ENCODE measurements at regions of chr2 and their contacts with region 1.

Region 1: GRCh38 chr2:96536445-96537065 is at the start of gene ARID5A:
- DNase-seq: peak; percentile 97
- H3K4me3 Mint-ChIP-seq: peak within 1 kb of the TSS; percentile 93
- H3K27ac Mint-ChIP-seq: peak within 1 kb of the TSS; percentile 94
- H3K4me1 Mint-ChIP-seq: peaks cover 54% of the 10 kb centered on the region
- H3K27me3 Mint-ChIP-seq: no peaks in the 10 kb centered on the region
- total RNA-seq, gene ARID5A: 214 and 229 TPM in 2 replicates

Region 2: GRCh38 chr2:96208143-96209010 is 328.2 kb before region 1 on chr2 and contains the start of gene STARD7:
- intact Hi-C with region 1: loop called (anchors 5 kb)
- DNase-seq: peak; percentile 99
- H3K4me3 Mint-ChIP-seq: peak within 1 kb of the TSS; percentile 96
- H3K27ac Mint-ChIP-seq: peak within 1 kb of the TSS; percentile 90
- H3K4me1 Mint-ChIP-seq: peaks cover 50% of the 10 kb centered on the region
- H3K27me3 Mint-ChIP-seq: no peaks in the 10 kb centered on the region
- total RNA-seq, gene STARD7: 212 and 217 TPM in 2 replicates

Region 3: GRCh38 chr2:96320728-96321622 is 215.6 kb before region 1 on chr2:
- intact Hi-C with region 1: loop called (anchors 2 kb)
- DNase-seq: peak; percentile 85
- H3K4me3 Mint-ChIP-seq: peak overlapping the region; percentile 88
- H3K27ac Mint-ChIP-seq: peak overlapping the region; percentile 98
- H3K4me1 Mint-ChIP-seq: peaks cover 55% of the 10 kb centered on the region
- H3K27me3 Mint-ChIP-seq: no peaks in the 10 kb centered on the region

Region 4: DNA sequence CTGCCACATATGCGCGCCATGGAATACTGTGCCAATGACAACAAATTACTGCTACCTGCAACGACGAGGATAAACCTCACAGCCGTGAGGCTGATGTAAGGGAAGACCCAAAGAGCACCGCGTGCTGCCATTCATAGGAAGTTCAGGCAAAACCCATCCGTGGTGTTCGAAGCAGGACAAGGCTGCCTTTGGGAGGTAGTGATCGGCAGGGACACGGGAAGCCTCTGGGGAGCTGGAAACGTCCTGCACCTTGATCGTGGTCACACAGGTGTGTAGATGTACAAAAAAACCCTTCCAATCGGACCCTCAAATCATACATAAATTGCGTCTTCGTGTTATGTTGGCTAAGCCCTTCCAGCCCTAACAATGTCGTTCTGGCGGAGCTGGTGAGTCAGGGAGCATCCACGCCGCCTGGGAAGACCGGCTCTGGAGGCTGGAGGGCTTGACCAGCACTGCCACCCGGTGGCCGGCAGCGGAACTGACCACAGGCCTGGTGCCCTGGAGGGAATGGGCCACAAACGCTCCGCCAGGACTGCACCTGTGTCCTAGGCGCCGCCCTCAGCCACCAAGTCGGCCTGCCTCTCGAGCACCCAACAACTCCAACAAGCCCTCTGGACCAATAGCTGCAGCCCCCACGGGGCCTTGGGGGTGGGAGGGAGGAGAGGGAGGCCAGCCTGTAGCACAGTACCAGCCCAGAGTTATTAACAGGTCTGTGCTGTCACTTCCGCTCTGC is 27.3 kb before region 1 on chr2:
- intact Hi-C with region 1: loop called (anchors 2 kb)
- DNase-seq: peak; percentile 91
- H3K4me3 Mint-ChIP-seq: peak overlapping the region; percentile 28
- H3K27ac Mint-ChIP-seq: no peak overlapping the region
- H3K4me1 Mint-ChIP-seq: peaks cover 37% of the 10 kb centered on the region
- H3K27me3 Mint-ChIP-seq: no peaks in the 10 kb centered on the region

Region 5: GRCh38 chr2:96602330-96602823 is 65.8 kb after region 1 on chr2:
- intact Hi-C with region 1: loop called (anchors 5 kb)
- DNase-seq: peak; percentile 61
- H3K4me3 Mint-ChIP-seq: no peak overlapping the region
- H3K27ac Mint-ChIP-seq: no peak overlapping the region
- H3K4me1 Mint-ChIP-seq: peaks cover 23% of the 10 kb centered on the region
- H3K27me3 Mint-ChIP-seq: no peaks in the 10 kb centered on the region

Region 6: GRCh38 chr2:96760036-96760985 is 223.8 kb after region 1 on chr2 and contains the start of gene CNNM4:
- intact Hi-C with region 1: loop called (anchors 5 kb)
- DNase-seq: peak; percentile 97
- H3K4me3 Mint-ChIP-seq: peak within 1 kb of the TSS; percentile 85
- H3K27ac Mint-ChIP-seq: peak within 1 kb of the TSS; percentile 91
- H3K4me1 Mint-ChIP-seq: peaks cover 46% of the 10 kb centered on the region
- H3K27me3 Mint-ChIP-seq: no peaks in the 10 kb centered on the region
- total RNA-seq, gene CNNM4: 10.1 and 11.2 TPM in 2 replicates

Region 7: DNA sequence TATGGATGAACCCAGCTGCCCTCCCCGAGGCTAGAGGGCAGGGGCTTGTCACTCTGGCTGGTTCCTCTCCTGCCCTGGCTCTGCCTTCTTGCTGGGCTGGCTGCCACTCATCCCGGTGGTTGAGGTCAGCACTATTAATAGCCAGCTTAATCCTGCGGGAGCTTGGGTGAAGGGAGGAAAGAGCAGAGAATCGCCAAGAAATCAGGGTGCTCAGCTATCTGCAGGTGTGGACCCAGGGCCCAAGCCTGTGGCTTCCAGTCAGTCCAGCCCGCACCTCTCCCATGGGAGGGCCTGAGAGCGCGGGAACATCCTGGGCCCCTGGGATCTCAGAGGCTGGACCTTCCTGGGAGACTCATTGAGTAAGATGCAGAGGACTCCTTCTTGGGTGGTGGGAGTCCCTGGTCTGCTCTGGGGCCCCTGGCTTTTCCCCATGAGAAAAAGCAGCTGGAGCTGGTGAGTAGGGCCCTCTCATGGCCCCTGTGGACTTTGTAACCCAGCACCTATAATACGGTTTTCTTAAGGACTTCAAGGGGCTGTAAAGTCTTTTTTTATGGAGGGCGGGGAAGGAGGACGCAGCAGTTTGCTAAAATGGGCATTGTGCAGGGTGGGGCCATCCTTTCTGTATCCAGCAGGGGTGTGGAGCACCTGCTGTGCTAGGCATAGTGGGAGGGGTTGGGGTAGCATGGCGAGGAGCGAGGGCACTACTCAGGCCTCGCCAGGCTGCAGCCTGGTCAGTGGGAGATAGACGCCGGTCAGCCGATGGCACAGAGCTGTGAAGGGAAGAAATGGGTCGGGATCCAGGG is 252.1 kb after region 1 on chr2:
- intact Hi-C with region 1: no loop called
- DNase-seq: no peak
- H3K4me3 Mint-ChIP-seq: no peak overlapping the region
- H3K27ac Mint-ChIP-seq: no peak overlapping the region
- H3K4me1 Mint-ChIP-seq: peaks cover 2% of the 10 kb centered on the region
- H3K27me3 Mint-ChIP-seq: no peaks in the 10 kb centered on the region

Region 8: GRCh38 chr2:96960153-96960961 is 423.8 kb after region 1 on chr2:
- intact Hi-C with region 1: loop called (anchors 5 kb)
- DNase-seq: peak; percentile 95
- H3K4me3 Mint-ChIP-seq: peak overlapping the region; percentile 65
- H3K27ac Mint-ChIP-seq: peak overlapping the region; percentile 84
- H3K4me1 Mint-ChIP-seq: peaks cover 52% of the 10 kb centered on the region
- H3K27me3 Mint-ChIP-seq: no peaks in the 10 kb centered on the region

Measured in activated CD4-positive, alpha-beta T cell treated with anti-CD3 and anti-CD28 coated beads, Interleukin-2, amount 10 ng/mL, durations not matched to agents 24 days and 14 days (primary cell).